ENCODE measurements at regions of chr3 and their contacts with region 1.

Region 1: DNA sequence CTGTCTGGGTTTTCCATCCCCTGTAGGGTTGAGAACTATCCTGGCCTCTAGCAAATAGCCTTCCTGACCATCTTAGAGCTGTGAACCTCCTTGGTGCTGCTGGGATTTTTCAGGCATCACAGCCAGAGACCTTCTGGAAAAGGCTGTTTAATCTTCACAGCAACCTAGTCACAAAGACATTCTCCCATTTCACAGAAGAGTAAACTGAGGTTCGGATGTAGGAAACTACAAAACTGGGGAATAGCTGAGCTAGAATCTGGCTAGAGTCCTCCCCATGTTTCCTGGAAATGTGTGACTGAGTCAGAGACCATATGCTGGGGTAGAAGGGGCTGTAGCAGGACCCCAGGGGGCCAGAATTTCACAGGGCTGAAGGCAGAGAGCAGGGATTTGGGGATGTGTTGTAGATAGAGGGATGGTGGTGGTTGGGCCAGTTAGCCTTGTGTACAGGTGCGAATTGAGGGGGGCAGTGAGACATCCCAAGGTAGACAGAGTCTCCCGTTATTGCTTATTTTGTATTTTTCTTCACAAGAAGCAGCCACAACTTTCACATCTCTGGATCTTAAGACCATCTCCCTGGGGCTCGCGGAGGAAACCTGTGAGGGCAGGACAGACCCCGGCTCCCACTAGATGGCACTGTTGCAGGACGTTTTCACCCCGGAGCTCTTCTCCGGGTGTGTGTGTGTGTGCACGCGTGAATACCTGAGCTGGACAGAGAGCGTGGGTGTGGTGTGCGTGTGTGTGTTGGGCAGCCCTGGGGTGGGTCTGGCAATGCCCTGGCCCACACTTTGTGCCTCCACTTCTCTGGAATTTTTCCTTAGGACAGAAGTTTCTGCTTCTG is 66.9 kb upstream of the PRR23C start:
- DNase-seq: peak; percentile 10 to 87
- H3K4me3 ChIP-seq: no peak overlapping the region
- H3K27ac ChIP-seq: no peak overlapping the region
- H3K4me1 ChIP-seq: no peaks in the 10 kb centered on the region; a peak in 1 of 7 replicates
- H3K27me3 ChIP-seq: no peaks in the 10 kb centered on the region
- CTCF ChIP-seq: peak; percentile 74 to 85 (median 79)
- EP300 ChIP-seq: no peak
- POLR2A ChIP-seq: no peak
- RAD21 ChIP-seq: peak; percentile 77

Region 2: DNA sequence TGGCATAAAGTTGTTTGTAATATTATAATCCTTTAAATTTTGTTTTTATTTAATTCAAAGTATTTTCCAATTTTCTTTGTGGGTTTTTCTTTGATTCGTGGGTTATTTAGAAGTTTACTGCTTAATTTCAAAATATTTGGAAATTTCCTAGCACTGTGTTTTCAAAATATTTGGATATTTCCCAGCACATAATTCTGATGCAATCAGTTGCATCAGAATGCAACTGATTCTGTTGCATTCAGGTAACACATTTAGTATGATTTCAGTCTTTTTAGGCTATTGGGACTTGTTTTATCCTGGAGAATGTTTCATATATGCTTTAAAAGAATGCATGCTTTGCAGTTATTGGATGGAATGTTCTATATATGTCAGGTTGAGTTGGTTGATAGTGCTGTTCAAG is 48.7 kb before region 1 on chr3:
- CTCF ChIA-PET with region 1: no interaction called
- POLR2A ChIA-PET with region 1: no interaction called
- DNase-seq: no peak
- H3K4me3 ChIP-seq: no peak overlapping the region
- H3K27ac ChIP-seq: no peak overlapping the region
- H3K4me1 ChIP-seq: no peaks in the 10 kb centered on the region
- H3K27me3 ChIP-seq: no peaks in the 10 kb centered on the region
- CTCF ChIP-seq: no peak
- EP300 ChIP-seq: no peak
- POLR2A ChIP-seq: no peak
- RAD21 ChIP-seq: no peak

Region 3: DNA sequence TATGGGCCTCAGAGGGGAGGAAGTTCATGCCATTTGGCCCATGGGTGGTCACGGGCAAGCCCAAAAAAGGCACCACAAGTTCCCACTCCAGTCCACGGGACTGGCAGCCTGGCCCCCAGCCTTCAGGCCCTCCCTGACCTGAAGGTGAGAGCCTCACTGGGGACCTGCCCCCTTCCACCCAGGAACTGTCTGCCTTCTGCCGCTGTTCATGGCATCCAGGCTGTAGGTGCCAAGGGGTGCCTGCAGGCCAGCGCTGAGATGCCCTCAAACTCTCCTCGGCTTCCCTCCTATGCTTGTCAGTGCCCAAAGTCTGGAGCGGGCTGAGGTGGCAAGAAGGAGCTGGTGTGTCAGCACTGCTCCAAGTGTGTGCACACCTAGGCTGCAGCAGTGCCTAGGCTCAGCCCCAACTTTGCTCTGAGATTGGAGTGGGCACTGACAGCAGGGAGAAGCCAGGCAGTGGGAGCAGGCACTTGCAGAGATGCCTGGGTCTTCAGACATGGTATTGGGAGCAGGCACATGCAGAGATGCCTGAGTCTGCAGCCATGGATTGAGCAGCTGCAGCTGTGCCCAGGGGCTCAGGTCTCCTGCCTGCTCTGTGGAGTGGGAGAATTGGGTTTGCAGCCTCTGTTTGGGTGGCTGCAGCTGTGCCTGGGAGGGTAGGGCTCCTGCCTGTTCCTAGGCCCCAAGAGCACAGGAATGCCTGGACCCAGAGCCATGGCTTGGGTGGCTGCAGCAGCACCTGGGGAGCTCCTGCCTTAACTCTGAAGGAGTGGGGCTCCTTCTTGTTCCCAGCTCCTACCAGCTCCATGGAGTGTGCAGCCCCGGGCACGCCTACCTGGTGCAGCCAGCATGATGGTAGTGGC is 22.9 kb before region 1 on chr3:
- CTCF ChIA-PET with region 1: interaction called, 23 read pairs
- POLR2A ChIA-PET with region 1: interaction called, 3 read pairs
- DNase-seq: no peak
- H3K4me3 ChIP-seq: no peak overlapping the region
- H3K27ac ChIP-seq: no peak overlapping the region
- H3K4me1 ChIP-seq: no peaks in the 10 kb centered on the region
- H3K27me3 ChIP-seq: no peaks in the 10 kb centered on the region
- CTCF ChIP-seq: no peak
- EP300 ChIP-seq: no peak
- POLR2A ChIP-seq: no peak
- RAD21 ChIP-seq: no peak

Region 4: DNA sequence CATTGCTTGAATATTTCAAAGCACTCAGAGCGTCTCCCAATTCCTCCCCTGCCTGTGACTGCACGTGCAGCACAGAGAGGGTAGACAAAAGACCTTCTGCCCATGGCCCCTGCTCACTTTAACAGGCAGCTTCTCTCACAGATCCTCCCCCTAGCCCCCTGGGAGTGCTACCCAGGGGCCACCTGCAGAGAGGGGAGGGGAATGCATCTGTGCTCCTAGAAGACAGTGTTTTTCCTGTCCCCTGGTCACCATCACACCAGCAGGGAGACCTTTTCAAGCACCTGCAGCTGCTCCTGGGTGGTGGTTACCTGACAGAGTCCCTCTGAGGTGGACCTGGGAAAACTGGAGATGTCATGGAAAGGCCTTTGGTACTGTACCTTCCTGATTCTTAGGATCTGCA is 10.2 kb before region 1 on chr3:
- CTCF ChIA-PET with region 1: interaction called, 29 read pairs
- POLR2A ChIA-PET with region 1: no interaction called
- DNase-seq: no peak
- H3K4me3 ChIP-seq: no peak overlapping the region
- H3K27ac ChIP-seq: no peak overlapping the region
- H3K4me1 ChIP-seq: 0 out of 7 replicates have a peak, but pooled peaks cover 0 to 2% (median 0%) of the 10 kb centered on the region in 4 experiments
- H3K27me3 ChIP-seq: no peaks in the 10 kb centered on the region; a peak in 1 of 7 replicates
- CTCF ChIP-seq: no peak
- EP300 ChIP-seq: no peak
- POLR2A ChIP-seq: no peak
- RAD21 ChIP-seq: no peak

Region 5: DNA sequence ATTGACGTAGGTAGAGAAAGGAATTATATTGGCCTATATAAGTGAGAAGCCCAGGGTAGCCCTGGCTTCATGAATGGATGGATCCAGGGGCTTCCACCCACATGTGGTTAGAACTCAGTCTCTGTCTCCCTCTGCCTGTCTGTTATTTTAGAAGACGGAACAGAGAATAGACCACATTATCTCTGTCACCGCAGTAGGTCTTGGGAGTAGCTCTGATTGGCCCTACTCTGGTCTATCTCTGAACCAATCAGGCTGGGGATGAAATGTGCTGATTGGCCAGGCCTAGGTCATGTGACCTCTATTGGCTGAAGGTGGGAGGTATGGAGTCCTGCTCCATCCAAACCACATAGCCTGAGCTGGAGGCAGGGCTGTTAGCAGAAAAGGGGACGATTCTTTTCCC is 76.0 kb after region 1 on chr3:
- CTCF ChIA-PET with region 1: interaction called, 14 read pairs
- POLR2A ChIA-PET with region 1: no interaction called
- DNase-seq: no peak
- H3K4me3 ChIP-seq: no peak overlapping the region
- H3K27ac ChIP-seq: no peak overlapping the region
- H3K4me1 ChIP-seq: no peaks in the 10 kb centered on the region
- H3K27me3 ChIP-seq: no peaks in the 10 kb centered on the region
- CTCF ChIP-seq: no peak; a peak in 1 of 4 replicates
- EP300 ChIP-seq: no peak
- POLR2A ChIP-seq: no peak
- RAD21 ChIP-seq: peak in 1 of 2 experiments; percentile 23; a peak in 2 of 4 replicates

Region 6: GRCh38 chr3:139329345-139329850 is 217.8 kb after region 1 on chr3:
- CTCF ChIA-PET with region 1: interaction called, 24 read pairs
- POLR2A ChIA-PET with region 1: no interaction called
- DNase-seq: peak; percentile 57 to 99
- H3K4me3 ChIP-seq: peak overlapping the region in 2 of 4 experiments; percentile 14 to 45; a peak in 2 of 8 replicates
- H3K27ac ChIP-seq: no peak overlapping the region
- H3K4me1 ChIP-seq: no peaks in the 10 kb centered on the region
- H3K27me3 ChIP-seq: peaks cover 0 to 5% (median 4%) of the 10 kb centered on the region in 4 experiments; a peak in 3 of 7 replicates
- CTCF ChIP-seq: peak; percentile 99 to 100 (median 99)
- EP300 ChIP-seq: no peak
- POLR2A ChIP-seq: no peak
- RAD21 ChIP-seq: peak; percentile 97 to 99

Measured in H1 (cell line).